ENCODE measurements at regions of chr6 and their contacts with region 1.

Region 1: GRCh38 chr6:27132532-27133280 is 114.8 kb upstream of the PRSS16 start:
- DNase-seq: peak; percentile 69 to 98 (median 94)
- ATAC-seq: peak; percentile 84
- H3K4me3 Mint-ChIP-seq: no peak overlapping the region
- H3K27ac Mint-ChIP-seq: no peak overlapping the region
- H3K4me1 Mint-ChIP-seq: peaks cover 5 to 20% (median 10%) of the 10 kb centered on the region in 4 donors
- H3K27me3 Mint-ChIP-seq: no peaks in the 10 kb centered on the region

Region 2: GRCh38 chr6:27101824-27102223 is 30.9 kb before region 1 on chr6:
- POLR2A ChIA-PET with region 1: no interaction called
- DNase-seq: no peak
- ATAC-seq: no peak
- H3K4me3 Mint-ChIP-seq: no peak overlapping the region
- H3K27ac Mint-ChIP-seq: no peak overlapping the region
- H3K4me1 Mint-ChIP-seq: peaks cover 6 to 10% (median 7%) of the 10 kb centered on the region in 4 donors
- H3K27me3 Mint-ChIP-seq: peaks cover 21 to 39% (median 36%) of the 10 kb centered on the region in 5 donors

Region 3: GRCh38 chr6:27114792-27115191 is 17.9 kb before region 1 on chr6:
- POLR2A ChIA-PET with region 1: no interaction called
- DNase-seq: no peak
- ATAC-seq: no peak
- H3K4me3 Mint-ChIP-seq: no peak overlapping the region
- H3K27ac Mint-ChIP-seq: no peak overlapping the region
- H3K4me1 Mint-ChIP-seq: no peaks in the 10 kb centered on the region
- H3K27me3 Mint-ChIP-seq: peaks cover 15 to 35% (median 28%) of the 10 kb centered on the region in 5 donors

Region 4: DNA sequence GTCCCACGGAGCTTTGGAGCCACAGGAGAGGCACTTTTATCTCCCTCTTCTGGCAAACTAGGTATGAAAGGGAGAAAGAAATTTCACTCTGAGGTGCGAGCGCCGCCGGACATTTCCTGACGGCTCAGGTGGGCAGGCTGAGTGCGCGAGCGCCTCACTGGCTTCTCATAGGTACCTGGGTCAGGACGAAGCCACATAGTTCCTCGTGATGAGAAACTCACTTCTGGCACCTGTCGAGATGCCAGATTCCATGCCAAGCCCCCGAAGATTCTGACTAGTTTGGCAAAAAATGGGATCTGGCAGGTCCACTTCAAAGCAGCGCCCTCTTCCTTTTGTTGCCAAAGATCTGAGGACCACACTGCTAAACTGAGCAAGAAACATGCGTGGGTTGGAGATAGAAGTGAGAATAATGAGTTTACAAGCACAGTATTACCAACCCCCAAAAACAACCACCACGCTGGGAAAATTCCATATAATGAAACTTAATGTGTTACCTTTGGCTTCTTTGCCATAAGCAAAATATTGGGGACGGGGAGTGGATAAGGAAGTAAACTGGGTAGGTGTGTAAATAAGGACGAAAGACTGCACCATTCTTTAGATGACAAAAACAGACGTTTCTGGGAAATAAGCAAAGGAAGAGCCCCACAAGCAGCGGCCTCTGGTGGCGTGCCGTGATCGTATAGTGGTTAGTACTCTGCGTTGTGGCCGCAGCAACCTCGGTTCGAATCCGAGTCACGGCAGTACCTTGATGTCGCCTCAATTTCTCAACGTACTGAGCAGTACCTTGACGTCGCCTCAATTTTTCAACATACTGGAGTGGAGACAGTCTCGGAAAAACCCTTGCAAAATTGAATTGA is 25.0 kb after region 1 on chr6:
- POLR2A ChIA-PET with region 1: interaction called, 44 read pairs
- DNase-seq: peak; percentile 64 to 92 (median 86)
- ATAC-seq: peak; percentile 87 to 91
- H3K4me3 Mint-ChIP-seq: peak overlapping the region; percentile 79 to 92 (median 90)
- H3K27ac Mint-ChIP-seq: peak overlapping the region; percentile 56 to 99 (median 84)
- H3K4me1 Mint-ChIP-seq: peaks cover 23 to 48% (median 42%) of the 10 kb centered on the region in 4 donors
- H3K27me3 Mint-ChIP-seq: no peaks in the 10 kb centered on the region

Region 5: DNA sequence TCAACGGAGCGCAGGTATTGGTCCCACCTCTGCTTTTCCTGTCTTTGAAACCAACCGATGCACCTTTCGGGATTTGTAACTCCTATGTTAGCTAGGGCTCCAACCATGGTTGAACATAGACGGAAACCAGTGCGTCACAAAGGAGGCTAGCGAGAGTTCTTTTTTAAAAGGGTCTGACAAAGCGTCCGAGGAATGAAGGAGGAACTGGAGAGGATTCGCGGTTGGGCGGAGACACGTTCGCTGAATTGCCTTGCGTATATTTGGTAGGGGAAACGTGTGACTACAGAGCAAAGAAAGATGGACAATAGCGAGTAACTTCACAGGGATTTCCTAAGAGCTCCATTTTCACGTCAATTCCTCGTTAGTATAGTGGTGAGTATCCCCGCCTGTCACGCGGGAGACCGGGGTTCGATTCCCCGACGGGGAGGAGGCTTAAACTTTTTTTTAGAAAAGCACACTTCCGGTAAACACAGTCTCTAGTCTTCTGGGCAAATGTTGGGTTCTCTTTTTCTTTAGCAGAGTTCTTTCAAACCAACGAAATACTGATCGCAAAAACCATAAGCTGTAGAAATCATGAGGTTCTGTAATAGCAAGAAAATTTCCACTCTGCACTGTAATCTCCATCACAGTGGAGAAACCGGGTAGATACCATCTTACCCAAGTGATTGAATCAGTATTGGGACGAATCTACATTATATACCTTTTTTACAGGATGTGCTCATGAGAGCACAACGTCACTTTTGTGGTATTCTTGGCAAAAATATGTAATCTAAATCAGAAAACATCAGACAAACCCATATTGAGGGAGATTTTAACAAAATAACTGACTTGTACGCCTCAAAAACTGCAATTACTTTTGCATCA is 346.8 kb after region 1 on chr6:
- POLR2A ChIA-PET with region 1: interaction called, 10 read pairs
- DNase-seq: peak; percentile 75 to 97 (median 92)
- ATAC-seq: peak; percentile 71 to 74
- H3K4me3 Mint-ChIP-seq: no peak overlapping the region
- H3K27ac Mint-ChIP-seq: no peak overlapping the region
- H3K4me1 Mint-ChIP-seq: peaks cover 0 to 15% (median 3%) of the 10 kb centered on the region in 4 donors
- H3K27me3 Mint-ChIP-seq: no peaks in the 10 kb centered on the region

Region 6: GRCh38 chr6:27825025-27825793 is 692.5 kb after region 1 on chr6:
- POLR2A ChIA-PET with region 1: interaction called, 12 read pairs
- DNase-seq: peak in 1 of 10 donors; percentile 40
- ATAC-seq: no peak
- H3K4me3 Mint-ChIP-seq: peak overlapping the region; percentile 83 to 99 (median 92)
- H3K27ac Mint-ChIP-seq: peak overlapping the region; percentile 96 to 100 (median 97)
- H3K4me1 Mint-ChIP-seq: peaks cover 8 to 43% (median 31%) of the 10 kb centered on the region in 4 donors
- H3K27me3 Mint-ChIP-seq: no peaks in the 10 kb centered on the region

Region 7: DNA sequence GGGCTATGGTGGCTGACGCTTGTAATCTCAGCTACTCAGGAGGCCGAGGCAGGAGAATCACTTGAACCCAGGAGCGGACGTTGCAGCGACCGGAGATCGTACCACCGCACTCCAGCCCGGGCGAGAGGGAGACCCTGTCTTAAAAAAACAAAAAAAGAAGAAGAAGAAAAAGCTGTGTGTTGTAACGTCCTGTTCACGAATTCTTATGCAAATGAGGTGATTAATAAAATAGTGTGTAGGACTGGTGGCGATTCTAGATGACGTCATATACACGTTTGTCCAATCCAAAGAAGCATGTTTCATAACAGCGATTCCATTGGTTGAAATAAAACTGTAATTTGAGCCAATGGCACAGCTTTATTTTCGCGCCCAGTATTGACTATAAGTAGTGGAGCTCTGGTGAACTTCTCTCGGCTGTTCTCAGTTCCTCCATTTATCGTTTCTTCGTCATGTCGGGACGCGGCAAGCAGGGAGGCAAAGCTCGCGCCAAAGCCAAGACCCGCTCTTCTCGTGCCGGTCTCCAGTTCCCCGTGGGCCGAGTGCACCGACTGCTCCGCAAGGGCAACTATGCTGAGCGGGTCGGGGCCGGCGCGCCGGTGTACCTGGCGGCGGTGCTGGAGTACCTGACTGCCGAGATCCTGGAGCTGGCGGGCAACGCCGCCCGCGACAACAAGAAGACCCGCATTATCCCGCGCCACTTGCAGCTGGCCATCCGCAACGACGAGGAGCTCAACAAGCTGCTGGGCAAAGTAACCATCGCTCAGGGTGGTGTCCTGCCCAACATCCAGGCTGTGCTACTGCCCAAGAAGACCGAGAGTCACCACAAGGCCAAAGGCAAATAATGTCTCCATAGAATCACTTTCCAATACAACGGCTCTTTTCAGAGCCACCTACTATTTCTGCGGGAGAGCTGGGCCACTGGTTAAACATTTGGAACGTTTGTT is 732.5 kb after region 1 on chr6:
- POLR2A ChIA-PET with region 1: interaction called, 10 read pairs
- DNase-seq: peak; percentile 43 to 91 (median 80)
- ATAC-seq: peak; percentile 81
- H3K4me3 Mint-ChIP-seq: peak overlapping the region; percentile 87 to 99 (median 98)
- H3K27ac Mint-ChIP-seq: peak overlapping the region; percentile 87 to 99 (median 96)
- H3K4me1 Mint-ChIP-seq: peaks cover 15 to 45% (median 39%) of the 10 kb centered on the region in 4 donors
- H3K27me3 Mint-ChIP-seq: no peaks in the 10 kb centered on the region